ENCODE measurements at regions of chr10 and their contacts with region 1.

Region 1: GRCh38 chr10:79502561-79503309 is 9.6 kb upstream of the EIF5AL1 start:
- DNase-seq: no peak
- H3K4me3 ChIP-seq: no peak overlapping the region
- H3K27ac ChIP-seq: no peak overlapping the region
- H3K4me1 ChIP-seq: no peaks in the 10 kb centered on the region
- H3K27me3 ChIP-seq: peaks cover 3 to 5% of the 10 kb centered on the region in 2 experiments
- CTCF ChIP-seq: no peak
- POLR2A ChIP-seq: no peak

Region 2: DNA sequence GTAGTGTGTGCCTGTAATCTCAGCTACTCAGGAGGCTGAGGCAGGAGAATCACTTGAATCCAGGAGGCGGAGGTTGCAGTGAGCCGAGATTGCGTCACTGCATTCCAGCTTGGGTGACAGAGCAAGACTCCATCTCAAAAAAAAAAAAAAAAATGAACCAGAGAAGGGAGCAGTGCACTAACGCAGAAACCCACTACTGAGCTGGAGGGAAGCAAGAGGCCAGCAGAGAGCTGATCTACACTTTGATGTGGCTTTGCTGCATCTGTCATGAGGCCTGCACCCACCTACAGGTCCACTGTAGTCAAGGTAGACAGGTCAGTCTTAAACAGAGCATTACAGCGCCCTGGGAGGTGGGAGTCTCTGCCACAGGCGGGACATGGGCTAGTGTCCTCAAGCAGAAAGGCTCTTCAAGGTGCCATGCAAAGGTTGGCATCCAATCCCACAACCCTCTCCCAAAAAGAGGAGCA is 756.7 kb after region 1 on chr10:
- CTCF ChIA-PET with region 1: no interaction called
- POLR2A ChIA-PET with region 1: no interaction called
- dilution Hi-C with region 1: no loop called
- intact Hi-C with region 1: loop called (anchors 5 kb)
- DNase-seq: no peak
- H3K4me3 ChIP-seq: no peak overlapping the region
- H3K27ac ChIP-seq: no peak overlapping the region
- H3K4me1 ChIP-seq: no peaks in the 10 kb centered on the region
- H3K27me3 ChIP-seq: no peaks in the 10 kb centered on the region
- CTCF ChIP-seq: no peak
- POLR2A ChIP-seq: no peak